Right ventricle myocardium superior (tissue), 1 donor: ENCODE measurements at regions of chr9 and their contacts with region 1.

Region 1: DNA sequence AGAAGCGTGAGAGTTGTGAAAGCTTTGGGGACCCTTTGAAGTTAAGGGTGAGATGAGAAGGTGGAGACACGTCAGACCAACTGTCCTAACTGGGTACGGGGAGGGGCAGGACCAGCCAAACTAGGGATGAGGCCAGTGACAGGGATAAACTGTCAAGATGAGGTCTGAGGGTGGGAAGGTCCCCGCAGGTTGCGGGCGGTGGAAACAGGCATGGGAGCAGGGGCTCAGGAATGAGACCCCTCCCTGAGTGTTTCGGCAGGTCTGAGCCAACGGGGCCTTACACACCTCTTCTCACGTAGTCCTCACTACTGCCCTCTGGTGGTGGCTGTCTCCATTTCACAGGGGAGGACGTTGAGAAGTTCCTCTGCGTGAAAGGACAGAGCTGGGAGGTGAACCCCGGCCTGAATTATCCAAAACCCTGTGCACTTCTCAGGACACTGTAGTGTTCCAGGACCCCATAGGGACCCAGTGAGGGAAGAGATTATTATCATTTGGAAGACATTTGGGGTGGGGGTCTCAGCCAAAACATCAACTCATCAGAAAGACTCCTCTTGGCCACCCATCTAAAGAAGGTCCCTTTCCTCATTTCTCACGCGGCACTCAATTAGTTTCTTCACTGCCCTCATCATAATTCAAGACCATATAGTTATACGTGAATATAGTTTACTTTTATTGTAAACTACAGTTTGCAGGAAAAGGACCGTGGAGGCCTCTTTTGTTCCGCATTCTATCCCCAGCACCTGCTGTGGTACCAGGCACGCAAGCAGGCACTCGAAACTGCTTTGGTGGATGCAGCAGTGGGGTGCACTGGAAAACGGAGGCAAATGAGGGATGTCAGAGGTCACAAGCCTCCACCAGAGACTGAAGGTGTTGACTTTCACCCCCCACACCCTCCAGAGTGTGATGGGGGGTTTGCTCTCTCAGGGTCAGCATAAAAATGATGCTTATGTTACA is 21.7 kb upstream of the NANS start:
- DNase-seq: peak; percentile 85
- ATAC-seq: peak; percentile 88

Region 2: DNA sequence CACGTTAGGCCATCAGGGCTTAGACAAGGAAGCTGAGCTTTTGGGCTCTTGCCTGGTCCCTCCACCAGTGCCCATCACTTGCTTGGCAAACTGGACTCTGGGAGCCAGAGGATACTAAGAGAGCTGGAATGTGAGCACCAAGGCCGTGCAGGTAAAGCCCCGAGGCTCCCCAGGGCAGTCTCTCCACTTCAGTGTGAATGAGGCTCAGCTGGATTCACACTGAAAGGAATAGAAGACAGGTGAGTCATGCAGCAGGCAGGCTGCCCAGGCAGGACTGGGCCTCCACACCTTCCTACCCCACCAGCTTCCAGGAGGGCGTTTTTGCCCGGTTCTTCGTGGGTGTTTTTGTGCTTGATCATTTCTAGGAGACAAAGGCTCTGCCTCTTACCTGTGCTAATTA is 988.6 kb before region 1 on chr9:
- intact Hi-C with region 1: no loop called
- DNase-seq: no peak
- ATAC-seq: no peak

Region 3: DNA sequence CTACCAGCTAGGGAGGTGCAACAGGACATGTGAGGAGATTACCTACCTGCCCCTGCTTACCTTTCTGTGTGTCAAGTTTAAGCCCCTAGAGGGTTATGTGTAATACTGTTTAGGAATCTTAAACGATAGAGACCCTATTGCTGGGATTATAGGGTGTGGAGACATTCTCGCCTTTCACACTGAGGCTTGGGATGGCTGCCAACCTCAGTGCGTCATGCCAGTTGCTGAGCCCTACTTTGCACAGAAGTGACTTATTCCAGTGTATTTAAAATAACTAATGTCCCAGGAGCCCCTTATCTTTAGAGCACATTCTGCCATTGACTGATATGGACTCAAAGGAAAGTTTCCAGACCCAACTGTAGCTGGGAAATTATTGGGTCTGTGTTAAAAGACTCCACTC is 261.1 kb before region 1 on chr9:
- intact Hi-C with region 1: no loop called
- DNase-seq: peak; percentile 69
- ATAC-seq: no peak

Region 4: DNA sequence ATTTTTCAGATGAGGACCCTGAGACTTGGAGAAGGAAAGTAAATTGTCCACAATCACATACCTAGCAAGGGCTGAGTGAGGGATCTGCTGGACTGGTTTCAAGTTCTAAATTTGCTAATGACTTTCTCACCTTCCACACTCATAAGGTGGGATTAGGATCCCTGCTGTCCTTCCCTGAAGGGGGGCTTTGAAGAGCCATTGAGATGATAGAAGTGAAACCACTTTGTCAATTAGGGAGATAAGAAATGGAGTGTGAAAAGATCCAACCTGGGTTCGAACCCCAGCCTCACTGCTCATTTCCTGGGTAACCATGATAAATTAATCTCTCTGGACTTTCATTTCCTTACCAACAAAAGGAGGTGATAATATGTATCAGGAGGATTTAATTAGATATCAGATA is 214.5 kb before region 1 on chr9:
- intact Hi-C with region 1: no loop called
- DNase-seq: no peak
- ATAC-seq: no peak

Region 5: DNA sequence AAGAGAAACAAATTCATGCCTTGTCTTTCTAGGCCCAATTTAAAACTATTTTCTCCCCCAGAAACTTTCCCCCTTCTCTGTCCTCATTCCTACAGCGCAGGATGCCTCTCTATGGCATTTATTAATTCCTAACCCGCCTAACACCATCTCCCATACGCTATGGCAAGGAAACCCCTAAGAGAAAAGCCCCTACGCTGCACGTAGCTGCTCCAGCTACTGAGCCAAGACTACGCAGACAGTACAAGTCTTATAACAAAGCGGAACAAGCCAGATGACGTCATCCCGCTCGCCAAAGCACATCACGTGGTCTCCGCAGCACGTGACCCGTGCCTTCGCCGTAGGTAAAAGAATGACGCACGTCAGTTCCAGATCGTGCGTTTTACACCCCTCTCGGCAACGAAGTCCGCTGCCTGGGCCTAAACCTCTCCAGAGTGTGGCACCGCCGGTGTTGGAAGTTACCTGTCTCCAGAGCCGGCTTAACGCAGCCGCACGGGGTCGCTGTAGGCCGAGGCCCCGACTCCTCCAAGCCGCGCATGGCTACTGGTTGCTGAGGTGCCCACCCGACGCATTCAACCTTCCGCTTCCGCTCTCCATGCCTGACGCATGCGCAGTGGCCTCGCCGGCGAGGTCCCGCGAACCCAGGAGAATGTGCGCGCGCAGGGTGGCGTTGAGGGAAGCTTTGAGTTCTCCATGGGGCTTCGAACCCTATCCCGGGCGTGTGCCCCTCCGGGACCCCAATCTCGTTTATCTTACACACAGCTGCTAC is 112.7 kb before region 1 on chr9 and contains the start of gene TRMO:
- intact Hi-C with region 1: loop called (anchors 5 kb)
- DNase-seq: peak; percentile 99
- ATAC-seq: peak; percentile 98
- total RNA-seq, gene TRMO: 5.8 TPM

Region 6: DNA sequence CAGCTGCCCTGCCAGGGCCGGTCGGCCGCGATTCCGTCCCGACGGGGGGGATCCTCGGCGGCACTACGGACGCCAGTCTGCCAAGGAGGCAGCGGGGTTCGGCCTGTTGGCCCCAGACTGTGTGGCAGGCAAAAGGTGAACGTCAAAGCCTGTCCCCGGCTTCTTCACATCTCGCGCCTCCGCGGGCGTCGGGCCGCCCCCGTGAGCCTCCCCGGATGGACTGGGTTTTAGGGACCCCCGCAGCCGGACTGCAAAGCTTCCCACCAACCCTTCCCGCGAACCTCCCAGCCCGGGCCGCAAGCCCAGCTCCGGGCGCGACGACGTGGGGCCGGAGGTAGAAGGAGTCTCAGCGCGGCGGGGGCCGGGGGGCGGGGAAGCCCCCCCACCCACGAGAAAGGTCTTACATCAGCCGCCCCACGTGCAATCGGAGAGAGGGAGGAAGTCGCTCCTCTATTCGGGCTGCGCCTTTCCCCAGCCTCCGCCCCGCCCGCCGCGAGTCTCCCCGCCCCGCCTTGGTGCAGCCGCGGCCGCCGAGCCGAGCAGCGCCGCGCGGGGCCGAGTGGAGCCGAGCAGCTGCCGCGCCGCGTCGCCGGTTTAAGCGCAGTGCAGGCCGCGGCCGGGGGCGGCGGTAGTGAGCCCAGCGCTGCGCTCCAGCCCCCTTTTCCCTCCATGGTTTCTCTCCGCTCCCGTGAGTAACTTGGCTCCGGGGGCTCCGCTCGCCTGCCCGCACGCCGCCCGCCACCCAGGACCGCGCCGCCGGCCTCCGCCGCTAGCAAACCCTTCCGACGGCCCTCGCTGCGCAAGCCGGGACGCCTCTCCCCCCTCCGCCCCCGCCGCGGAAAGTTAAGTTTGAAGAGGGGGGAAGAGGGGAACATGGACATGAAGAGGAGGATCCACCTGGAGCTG is 51.9 kb before region 1 on chr9 and contains the start of gene ANP32B:
- intact Hi-C with region 1: loop called (anchors 5 kb)
- DNase-seq: peak; percentile 94
- ATAC-seq: peak; percentile 92
- total RNA-seq, gene ANP32B: 47.0 TPM

Region 7: DNA sequence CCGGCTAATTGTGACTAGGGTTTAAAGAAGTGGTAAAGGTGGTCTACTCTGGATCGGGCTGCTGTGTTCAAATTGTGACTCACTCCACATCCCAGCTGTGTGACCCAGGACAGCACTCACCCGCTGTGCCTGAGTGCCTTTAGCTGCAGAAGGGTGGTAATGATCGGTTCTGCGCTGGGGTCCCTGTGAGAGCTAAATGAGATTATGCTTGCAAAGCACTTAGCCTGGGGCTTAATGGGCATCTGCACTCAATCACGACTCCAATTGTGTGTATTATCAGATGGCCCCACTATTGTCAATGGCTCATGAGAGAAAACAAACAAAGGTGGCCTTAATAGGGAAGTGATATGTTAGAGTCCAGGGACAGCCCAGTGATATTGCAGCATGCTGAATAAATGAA is 245.7 kb after region 1 on chr9:
- intact Hi-C with region 1: no loop called
- DNase-seq: no peak
- ATAC-seq: no peak